PC-3 (cell line): ENCODE measurements at regions of chr4 and their contacts with region 1.

Region 1: GRCh38 chr4:68498413-68499007 is 51.2 kb downstream of the TMPRSS11E start:
- DNase-seq: peak; percentile 84
- ATAC-seq: peak; percentile 60
- H3K4me3 ChIP-seq: no peak overlapping the region
- H3K27ac ChIP-seq: no peak overlapping the region
- H3K4me1 ChIP-seq: peaks cover 9% of the 10 kb centered on the region; the same call in 1 of the 2 replicates
- H3K27me3 ChIP-seq: no peaks in the 10 kb centered on the region
- CTCF ChIP-seq: peak; percentile 98

Region 2: DNA sequence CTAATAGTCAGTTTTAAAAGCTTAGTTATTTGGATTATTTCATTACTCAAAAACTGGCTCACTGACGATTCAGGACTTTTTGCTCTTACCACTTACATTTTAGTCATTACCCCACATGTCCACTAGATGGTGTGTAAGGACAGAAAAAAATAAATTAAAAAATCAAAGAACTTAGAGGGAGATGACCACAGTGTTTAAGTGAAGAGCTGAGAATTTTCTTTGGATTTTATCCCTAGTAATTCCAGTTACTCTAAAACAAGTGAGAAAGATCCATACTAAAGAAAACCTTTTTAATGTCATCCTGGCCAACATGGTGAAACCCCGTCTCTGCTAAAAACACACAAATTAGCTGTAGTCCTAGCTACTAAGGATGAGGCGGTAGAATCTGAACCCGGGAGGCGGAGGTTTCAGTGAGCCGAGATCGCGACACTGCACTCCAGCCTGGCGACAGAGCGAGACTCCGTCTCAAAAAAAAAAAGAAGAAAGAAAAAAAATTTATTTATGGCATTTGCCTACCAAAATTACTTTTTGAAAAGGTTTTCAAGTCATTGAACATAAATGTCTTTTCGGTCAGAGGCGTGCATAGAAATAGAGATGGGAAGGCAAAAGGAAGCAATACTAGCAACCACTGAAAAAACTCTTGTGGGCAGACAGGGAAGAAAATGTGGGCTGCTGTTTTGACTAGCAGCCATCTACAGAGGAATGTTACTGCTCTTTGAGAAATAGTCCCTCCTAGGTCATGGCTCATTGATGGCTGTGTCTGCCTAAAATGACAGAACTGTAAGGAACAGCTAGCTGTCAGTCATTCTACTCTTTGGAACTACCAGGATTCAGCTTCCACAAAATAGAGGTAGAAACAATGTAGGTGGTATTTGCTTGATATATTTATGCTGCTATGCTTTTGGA is 226.4 kb before region 1 on chr4:
- CTCF ChIA-PET with region 1: no interaction called
- POLR2A ChIA-PET with region 1: no interaction called
- intact Hi-C with region 1: loop called (anchors 5 kb)
- DNase-seq: peak; percentile 81
- ATAC-seq: peak; percentile 72
- H3K4me3 ChIP-seq: peak overlapping the region; percentile 59
- H3K27ac ChIP-seq: no peak overlapping the region
- H3K4me1 ChIP-seq: peaks cover 20% of the 10 kb centered on the region
- H3K27me3 ChIP-seq: no peaks in the 10 kb centered on the region
- CTCF ChIP-seq: peak; percentile 89

Region 3: GRCh38 chr4:68518889-68519288 is 20.4 kb after region 1 on chr4:
- CTCF ChIA-PET with region 1: no interaction called
- POLR2A ChIA-PET with region 1: no interaction called
- intact Hi-C with region 1: no loop called
- DNase-seq: no peak
- ATAC-seq: no peak
- H3K4me3 ChIP-seq: no peak overlapping the region
- H3K27ac ChIP-seq: no peak overlapping the region
- H3K4me1 ChIP-seq: no peaks in the 10 kb centered on the region
- H3K27me3 ChIP-seq: no peaks in the 10 kb centered on the region
- CTCF ChIP-seq: 0 out of 2 replicates have a peak, but pooled peaks have one; percentile 21

Region 4: DNA sequence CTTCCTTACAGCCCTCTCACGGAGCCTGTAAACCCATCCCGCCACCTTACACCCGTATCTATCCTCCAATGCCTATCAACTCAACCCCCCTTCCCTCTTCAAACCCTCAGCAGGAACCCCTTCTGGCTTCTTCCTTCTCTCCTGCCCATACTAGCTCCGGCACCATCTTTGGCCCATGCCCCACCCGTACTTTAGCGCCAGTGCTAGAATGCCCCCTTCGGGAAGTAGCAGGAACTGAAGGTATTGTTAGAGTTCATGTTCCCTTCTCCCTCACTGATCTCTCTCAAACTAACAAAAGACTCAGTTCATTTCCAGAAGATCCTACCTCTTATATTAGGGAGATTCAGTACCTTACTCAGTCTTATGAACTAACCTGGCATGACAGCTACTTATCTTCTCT is 174.6 kb after region 1 on chr4:
- CTCF ChIA-PET with region 1: no interaction called
- POLR2A ChIA-PET with region 1: no interaction called
- intact Hi-C with region 1: loop called (anchors 5 kb)
- DNase-seq: no peak
- ATAC-seq: no peak
- H3K4me3 ChIP-seq: no peak overlapping the region
- H3K27ac ChIP-seq: no peak overlapping the region
- H3K4me1 ChIP-seq: peaks cover 12% of the 10 kb centered on the region
- H3K27me3 ChIP-seq: no peaks in the 10 kb centered on the region
- CTCF ChIP-seq: 0 out of 2 replicates have a peak, but pooled peaks have one; percentile 25

Region 5: DNA sequence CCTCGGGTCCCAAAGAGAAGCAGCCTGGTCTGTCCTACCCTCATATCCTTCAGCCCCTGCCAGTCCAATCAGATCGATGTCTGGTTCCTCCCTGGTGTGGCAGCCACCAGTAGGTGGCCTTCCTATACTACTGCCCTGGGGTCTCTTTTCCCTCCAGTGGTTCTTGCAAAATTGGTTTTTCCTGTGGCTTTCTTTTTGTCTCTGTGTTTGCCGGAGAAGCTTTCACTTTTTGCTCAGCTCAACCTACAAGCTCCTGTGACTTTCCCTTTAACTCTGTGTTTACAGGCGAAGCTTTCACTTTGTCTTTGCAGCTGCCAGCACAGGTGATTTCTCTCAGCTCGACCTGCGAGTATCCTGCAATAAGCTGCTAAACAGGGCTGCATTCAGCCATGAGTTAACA is 406.3 kb after region 1 on chr4:
- CTCF ChIA-PET with region 1: no interaction called
- POLR2A ChIA-PET with region 1: no interaction called
- intact Hi-C with region 1: loop called (anchors 5 kb)
- DNase-seq: peak; percentile 39
- ATAC-seq: peak; percentile 52
- H3K4me3 ChIP-seq: no peak overlapping the region
- H3K27ac ChIP-seq: no peak overlapping the region
- H3K4me1 ChIP-seq: peaks cover 20% of the 10 kb centered on the region
- H3K27me3 ChIP-seq: no peaks in the 10 kb centered on the region
- CTCF ChIP-seq: peak; percentile 60

Region 6: GRCh38 chr4:69025191-69025998 is 526.9 kb after region 1 on chr4:
- CTCF ChIA-PET with region 1: no interaction called
- POLR2A ChIA-PET with region 1: no interaction called
- intact Hi-C with region 1: loop called (anchors 1 kb)
- DNase-seq: peak; percentile 49
- ATAC-seq: peak; percentile 84
- H3K4me3 ChIP-seq: no peak overlapping the region
- H3K27ac ChIP-seq: no peak overlapping the region
- H3K4me1 ChIP-seq: no peaks in the 10 kb centered on the region
- H3K27me3 ChIP-seq: no peaks in the 10 kb centered on the region
- CTCF ChIP-seq: peak; percentile 70

Region 7: DNA sequence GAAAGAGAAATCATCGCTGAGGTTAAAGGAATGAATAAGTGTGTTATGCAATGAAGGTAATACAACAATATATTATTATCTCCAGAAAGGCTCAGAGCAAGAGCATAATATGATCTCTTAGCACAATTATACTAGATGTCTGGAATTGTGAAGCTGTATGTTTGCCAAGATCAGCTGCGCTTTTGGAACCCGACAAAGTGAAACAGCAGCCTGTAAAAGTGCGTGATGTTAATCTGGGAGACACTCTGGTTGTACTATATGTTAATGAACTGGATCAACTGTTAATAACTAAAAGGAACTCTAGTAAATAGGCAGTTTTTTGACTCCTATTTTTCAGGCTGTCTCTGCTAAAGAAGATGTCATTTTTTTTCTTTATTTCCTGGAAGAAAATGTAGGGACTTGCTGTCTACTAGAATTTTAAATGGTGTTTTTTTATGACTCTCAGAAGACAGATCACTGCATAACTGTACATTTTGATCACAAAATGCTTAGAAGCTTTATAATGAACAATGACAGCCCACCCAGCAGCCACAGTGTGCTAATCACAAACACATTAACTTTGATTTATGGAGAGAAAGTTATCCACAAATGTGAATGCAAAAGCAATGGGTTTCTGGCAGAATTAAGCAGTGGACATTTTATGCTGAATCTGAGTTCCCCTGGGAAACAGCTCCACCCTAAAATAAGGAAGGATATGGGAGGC is 832.0 kb after region 1 on chr4:
- CTCF ChIA-PET with region 1: no interaction called
- POLR2A ChIA-PET with region 1: no interaction called
- intact Hi-C with region 1: loop called (anchors 2 kb)
- DNase-seq: no peak
- ATAC-seq: no peak
- H3K4me3 ChIP-seq: no peak overlapping the region
- H3K27ac ChIP-seq: no peak overlapping the region
- H3K4me1 ChIP-seq: no peaks in the 10 kb centered on the region
- H3K27me3 ChIP-seq: no peaks in the 10 kb centered on the region
- CTCF ChIP-seq: no peak